ENCODE measurements at regions of chr3 and their contacts with region 1.

Region 1: GRCh38 chr3:63961891-63962290 is 49.7 kb upstream of the SCAANT1 start:
- DNase-seq: peak; percentile 60 to 79 (median 75)
- H3K4me3 ChIP-seq: no peak overlapping the region
- H3K27ac ChIP-seq: no peak overlapping the region
- H3K4me1 ChIP-seq: peaks cover 9 to 36% (median 26%) of the 10 kb centered on the region in 4 experiments
- H3K27me3 ChIP-seq: no peaks in the 10 kb centered on the region

Region 2: DNA sequence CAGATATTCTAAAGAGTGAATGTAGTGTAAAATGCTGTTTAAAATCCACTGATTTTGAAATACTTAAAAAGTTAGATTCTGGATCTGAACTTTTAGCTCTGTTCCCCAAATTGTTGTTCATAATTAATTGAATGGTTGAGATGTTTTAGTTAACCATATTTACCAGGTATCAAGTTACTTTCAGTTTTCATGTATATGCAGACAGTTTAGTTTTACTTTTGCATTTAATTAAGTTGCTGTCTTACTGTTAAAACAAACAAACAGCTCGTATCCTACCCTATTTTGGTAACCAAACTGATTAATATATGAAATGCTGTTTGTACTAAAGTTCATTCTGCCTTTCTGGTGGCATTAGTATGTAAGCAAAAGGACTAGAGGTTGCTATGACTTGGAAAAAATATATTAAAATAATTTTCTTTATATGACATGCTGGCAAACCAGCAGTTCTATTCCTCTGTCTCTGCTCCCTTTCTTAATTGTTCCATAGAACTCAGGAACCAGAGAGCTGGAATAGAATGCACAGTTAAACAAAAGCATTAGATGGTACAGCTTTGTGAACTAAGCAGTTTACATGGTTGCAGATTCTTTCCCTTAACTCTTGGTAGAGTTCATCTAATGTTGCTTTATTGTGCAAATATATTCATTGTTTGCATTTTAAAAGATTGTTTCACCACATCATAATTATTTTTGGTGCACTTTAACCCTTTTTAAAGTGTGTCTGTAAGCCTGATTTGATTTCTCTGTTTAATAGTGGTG is 10.2 kb before region 1 on chr3:
- CTCF ChIA-PET with region 1: interaction called, 11 read pairs
- POLR2A ChIA-PET with region 1: no interaction called
- DNase-seq: no peak
- H3K4me3 ChIP-seq: no peak overlapping the region
- H3K27ac ChIP-seq: no peak overlapping the region
- H3K4me1 ChIP-seq: peaks cover 0 to 2% (median 0%) of the 10 kb centered on the region in 4 experiments
- H3K27me3 ChIP-seq: no peaks in the 10 kb centered on the region

Region 3: GRCh38 chr3:63975723-63976122 is 13.8 kb after region 1 on chr3:
- CTCF ChIA-PET with region 1: interaction called, 257 read pairs
- POLR2A ChIA-PET with region 1: interaction called, 4 read pairs
- DNase-seq: no peak
- H3K4me3 ChIP-seq: no peak overlapping the region
- H3K27ac ChIP-seq: no peak overlapping the region
- H3K4me1 ChIP-seq: peaks cover 17 to 56% (median 37%) of the 10 kb centered on the region in 4 experiments
- H3K27me3 ChIP-seq: no peaks in the 10 kb centered on the region

Region 4: DNA sequence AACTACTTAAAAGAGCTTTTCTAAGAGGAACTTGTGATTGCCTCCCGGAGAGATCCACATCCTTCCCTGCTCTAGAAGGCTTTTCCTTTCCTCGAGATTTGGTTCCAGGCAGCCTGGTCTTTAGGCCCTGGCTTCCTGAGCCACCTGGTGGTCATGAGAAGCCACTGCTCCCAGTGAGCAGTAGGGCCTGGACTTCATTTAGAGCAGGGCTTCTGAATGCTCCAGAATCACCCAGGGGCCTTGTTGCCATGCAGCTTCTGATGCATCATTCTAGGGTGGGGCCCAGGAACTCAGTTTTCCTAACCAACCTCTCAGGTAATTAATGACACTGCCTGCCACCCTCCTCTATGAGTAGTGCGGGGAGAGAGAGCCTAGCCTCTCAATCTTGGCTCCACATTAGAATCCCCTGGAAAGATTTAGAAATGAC is 31.8 kb after region 1 on chr3:
- CTCF ChIA-PET with region 1: interaction called, 202 read pairs
- POLR2A ChIA-PET with region 1: no interaction called
- DNase-seq: peak; percentile 67 to 78 (median 76)
- H3K4me3 ChIP-seq: no peak overlapping the region
- H3K27ac ChIP-seq: no peak overlapping the region
- H3K4me1 ChIP-seq: no peaks in the 10 kb centered on the region
- H3K27me3 ChIP-seq: no peaks in the 10 kb centered on the region